ENCODE measurements at regions of chr14 and their contacts with region 1.

Region 1: DNA sequence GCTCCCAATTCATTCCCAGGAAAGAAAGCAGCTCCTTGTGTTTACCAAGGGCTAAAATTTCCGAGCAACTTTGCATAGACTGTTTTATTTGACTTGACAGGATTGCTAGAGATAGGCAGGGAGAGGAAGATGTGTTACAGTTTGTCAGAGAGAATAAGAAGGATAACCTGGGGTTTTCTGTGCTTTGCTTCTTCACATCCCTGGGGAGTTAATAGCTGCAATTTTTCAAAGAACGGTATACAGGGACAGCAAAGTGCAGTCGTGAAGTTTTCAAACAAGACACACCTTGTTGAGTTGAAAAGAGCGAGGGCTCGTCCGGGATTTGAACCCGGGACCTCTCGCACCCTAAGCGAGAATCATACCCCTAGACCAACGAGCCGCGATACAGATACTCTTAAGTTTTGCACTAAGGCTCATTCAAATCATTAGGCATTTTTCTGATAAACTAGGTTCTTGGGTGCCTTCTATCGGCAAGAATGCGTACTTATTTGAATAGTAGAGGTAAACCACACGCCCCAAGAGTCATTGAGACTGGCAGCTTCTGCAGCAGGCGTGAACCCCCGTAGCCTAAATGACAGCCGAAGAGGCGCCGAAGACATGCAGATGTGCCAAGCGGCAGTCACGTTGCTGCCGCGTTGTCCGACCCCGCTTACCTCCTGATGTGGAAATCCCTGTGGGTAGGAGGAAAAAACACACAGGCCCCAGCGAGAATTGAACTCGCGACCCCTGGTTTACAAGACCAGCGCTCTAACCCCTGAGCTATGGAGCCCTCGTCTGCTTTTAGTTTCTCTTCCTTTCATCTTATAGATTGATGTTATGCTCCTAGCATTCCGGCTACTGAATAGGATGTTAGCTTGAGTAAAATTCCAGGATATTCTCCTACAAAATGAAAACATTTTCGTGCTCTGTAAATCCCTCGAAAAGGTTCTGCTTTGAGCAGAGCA is 22.2 kb upstream of the RNASE12 start:
- DNase-seq: peak; percentile 62
- ATAC-seq: peak; percentile 72
- H3K4me3 Mint-ChIP-seq: no peak overlapping the region
- H3K27ac Mint-ChIP-seq: no peak overlapping the region
- H3K4me1 Mint-ChIP-seq: peaks cover 12% of the 10 kb centered on the region
- H3K27me3 Mint-ChIP-seq: no peaks in the 10 kb centered on the region
- CTCF ChIP-seq: no peak

Region 2: GRCh38 chr14:20327005-20327869 is 286.1 kb before region 1 on chr14:
- CTCF ChIA-PET with region 1: interaction called, 131 read pairs
- POLR2A ChIA-PET with region 1: interaction called, 4 read pairs
- intact Hi-C with region 1: loop called (anchors 1 kb)
- DNase-seq: no peak
- ATAC-seq: peak; percentile 49
- H3K4me3 Mint-ChIP-seq: no peak overlapping the region
- H3K27ac Mint-ChIP-seq: peak overlapping the region; percentile 42
- H3K4me1 Mint-ChIP-seq: peaks cover 26% of the 10 kb centered on the region
- H3K27me3 Mint-ChIP-seq: no peaks in the 10 kb centered on the region
- CTCF ChIP-seq: no peak

Region 3: DNA sequence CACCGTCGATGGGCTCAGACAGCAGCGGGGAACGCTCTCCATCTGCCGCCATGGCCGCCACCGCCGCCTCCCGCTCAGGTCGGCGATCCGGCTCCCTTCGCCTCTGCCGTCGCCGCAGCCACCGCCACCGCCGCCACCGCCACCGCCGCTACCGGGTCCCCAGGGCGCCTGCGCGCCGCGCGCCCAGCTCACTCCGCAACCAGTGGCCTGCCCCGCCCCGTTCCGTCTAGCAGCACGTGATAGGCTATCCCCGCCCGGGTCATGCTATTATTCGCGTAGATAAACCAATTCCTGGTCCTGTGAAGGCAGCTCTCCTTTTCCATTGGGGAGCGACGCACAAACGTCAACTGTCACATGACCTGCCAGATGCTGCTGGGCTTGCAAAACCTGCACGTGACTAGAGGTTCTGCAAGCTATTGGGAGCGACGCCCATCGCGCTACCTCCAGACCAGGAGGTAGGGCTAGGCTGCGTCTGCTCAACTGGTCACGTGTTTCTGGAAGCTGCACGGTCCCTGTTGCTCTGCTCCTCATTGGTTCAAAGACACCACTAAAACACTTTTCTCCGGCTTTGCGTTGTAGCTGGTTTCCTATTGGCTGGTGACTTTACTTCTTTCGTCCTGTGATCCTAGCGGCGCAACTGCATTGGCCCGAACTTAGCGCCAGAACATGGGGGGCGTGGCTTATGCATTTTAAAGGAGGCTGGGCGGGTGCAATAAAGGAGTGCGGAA is 151.9 kb before region 1 on chr14 and contains the start of gene PIP4P1:
- CTCF ChIA-PET with region 1: interaction called, 3 read pairs
- POLR2A ChIA-PET with region 1: interaction called, 7 read pairs
- intact Hi-C with region 1: loop called (anchors 1 kb)
- DNase-seq: peak; percentile 94
- ATAC-seq: peak; percentile 86
- H3K4me3 Mint-ChIP-seq: peak within 1 kb of the TSS; percentile 91
- H3K27ac Mint-ChIP-seq: peak within 1 kb of the TSS; percentile 96
- H3K4me1 Mint-ChIP-seq: peaks cover 55% of the 10 kb centered on the region
- H3K27me3 Mint-ChIP-seq: no peaks in the 10 kb centered on the region
- CTCF ChIP-seq: no peak
- total RNA-seq, gene PIP4P1: 84.8 and 87.3 TPM in 2 replicates

Region 4: GRCh38 chr14:20530771-20531571 is 82.4 kb before region 1 on chr14:
- CTCF ChIA-PET with region 1: interaction called, 3 read pairs
- POLR2A ChIA-PET with region 1: no interaction called
- intact Hi-C with region 1: loop called (anchors 1 kb)
- DNase-seq: peak; percentile 39
- ATAC-seq: peak; percentile 76
- H3K4me3 Mint-ChIP-seq: peak overlapping the region; percentile 48
- H3K27ac Mint-ChIP-seq: no peak overlapping the region
- H3K4me1 Mint-ChIP-seq: peaks cover 8% of the 10 kb centered on the region
- H3K27me3 Mint-ChIP-seq: peaks cover 8% of the 10 kb centered on the region
- CTCF ChIP-seq: no peak

Region 5: GRCh38 chr14:20662968-20663732 is 49.8 kb after region 1 on chr14:
- CTCF ChIA-PET with region 1: interaction called, 5 read pairs
- POLR2A ChIA-PET with region 1: interaction called, 9 read pairs
- intact Hi-C with region 1: loop called (anchors 1 kb)
- DNase-seq: peak; percentile 67
- ATAC-seq: peak; percentile 85
- H3K4me3 Mint-ChIP-seq: peak overlapping the region; percentile 87
- H3K27ac Mint-ChIP-seq: peak overlapping the region; percentile 67
- H3K4me1 Mint-ChIP-seq: peaks cover 53% of the 10 kb centered on the region
- H3K27me3 Mint-ChIP-seq: no peaks in the 10 kb centered on the region
- CTCF ChIP-seq: no peak

Region 6: DNA sequence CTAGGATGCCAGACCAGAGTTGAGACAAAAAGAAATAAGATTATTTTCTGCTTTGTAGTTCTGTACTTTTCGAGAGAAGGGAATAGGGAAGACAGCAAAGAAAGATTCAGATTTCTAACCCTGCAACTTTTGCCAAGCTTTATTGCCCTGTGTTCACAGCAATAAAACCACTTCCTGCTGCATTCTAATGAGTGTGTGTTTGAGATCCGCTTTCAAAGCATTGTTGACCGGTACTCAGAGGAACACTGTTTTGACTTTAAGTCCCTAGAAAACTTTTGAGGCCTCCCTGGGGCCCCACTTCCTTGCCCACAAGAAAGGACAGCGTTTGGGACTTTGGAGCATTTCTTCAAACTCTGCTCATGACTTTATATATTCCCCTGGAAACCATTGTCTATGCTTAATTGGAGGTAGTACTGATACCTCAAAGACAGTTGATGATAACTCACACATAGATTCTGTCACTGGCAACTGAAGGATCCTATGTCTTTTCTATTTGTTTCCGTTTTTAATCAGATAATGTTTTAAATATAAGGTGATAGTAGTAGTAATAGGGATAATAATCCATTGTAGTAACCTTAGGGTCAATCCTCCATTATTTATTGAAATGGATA is 169.0 kb after region 1 on chr14:
- CTCF ChIA-PET with region 1: no interaction called
- POLR2A ChIA-PET with region 1: interaction called, 3 read pairs
- intact Hi-C with region 1: loop called (anchors 5 kb)
- DNase-seq: no peak
- ATAC-seq: peak; percentile 59
- H3K4me3 Mint-ChIP-seq: peak overlapping the region; percentile 86
- H3K27ac Mint-ChIP-seq: peak overlapping the region; percentile 98
- H3K4me1 Mint-ChIP-seq: peaks cover 68% of the 10 kb centered on the region
- H3K27me3 Mint-ChIP-seq: no peaks in the 10 kb centered on the region
- CTCF ChIP-seq: no peak

Region 7: DNA sequence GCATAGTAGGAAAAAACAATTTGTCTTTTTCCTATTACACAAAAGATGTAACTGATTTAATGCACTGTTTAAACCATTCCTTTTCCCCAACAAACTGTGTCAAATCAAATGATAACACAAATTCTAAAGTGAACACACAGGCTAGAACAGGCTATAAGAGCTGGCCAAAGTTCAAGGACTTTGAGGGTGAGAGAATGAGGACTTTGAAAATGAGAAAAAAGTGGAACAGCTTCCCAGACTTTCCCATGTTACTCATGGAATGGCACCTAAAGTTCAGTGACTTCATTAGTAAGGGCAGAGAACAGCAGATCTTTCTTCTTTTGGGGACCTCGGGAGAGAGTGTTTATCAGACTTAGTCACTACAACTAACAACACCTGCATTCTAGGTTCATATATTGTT is 510.1 kb after region 1 on chr14:
- CTCF ChIA-PET with region 1: no interaction called
- POLR2A ChIA-PET with region 1: no interaction called
- intact Hi-C with region 1: no loop called
- DNase-seq: no peak
- ATAC-seq: no peak
- H3K4me3 Mint-ChIP-seq: no peak overlapping the region
- H3K27ac Mint-ChIP-seq: no peak overlapping the region
- H3K4me1 Mint-ChIP-seq: no peaks in the 10 kb centered on the region
- H3K27me3 Mint-ChIP-seq: peaks cover 42% of the 10 kb centered on the region
- CTCF ChIP-seq: no peak

Measured in activated B cell treated with CpG ODN at 0.5 μM for 24 hours (primary cell).